Breast epithelium (tissue), 4 donors: ENCODE measurements at regions of chr17 and their contacts with region 1.

Region 1: GRCh38 chr17:79220713-79221291 is 146.2 kb downstream of the ENGASE start:
- DNase-seq: no peak
- H3K4me3 ChIP-seq: no peak overlapping the region
- H3K27ac ChIP-seq: no peak overlapping the region
- H3K4me1 ChIP-seq: no peaks in the 10 kb centered on the region
- H3K27me3 ChIP-seq: peaks cover 0 to 100% of the 10 kb centered on the region in 2 donors
- CTCF ChIP-seq: no peak
- POLR2A ChIP-seq: no peak

Region 2: GRCh38 chr17:79262624-79263023 is 41.8 kb after region 1 on chr17:
- intact Hi-C with region 1: no loop called
- DNase-seq: no peak
- H3K4me3 ChIP-seq: no peak overlapping the region
- H3K27ac ChIP-seq: no peak overlapping the region
- H3K4me1 ChIP-seq: no peaks in the 10 kb centered on the region
- H3K27me3 ChIP-seq: peaks cover 0 to 89% of the 10 kb centered on the region in 2 donors
- CTCF ChIP-seq: no peak
- POLR2A ChIP-seq: no peak

Region 3: GRCh38 chr17:79515646-79516571 is 295.1 kb after region 1 on chr17:
- intact Hi-C with region 1: no loop called
- DNase-seq: no peak
- H3K4me3 ChIP-seq: no peak overlapping the region
- H3K27ac ChIP-seq: no peak overlapping the region
- H3K4me1 ChIP-seq: no peaks in the 10 kb centered on the region
- H3K27me3 ChIP-seq: peaks cover 0 to 55% of the 10 kb centered on the region in 2 donors
- CTCF ChIP-seq: no peak
- POLR2A ChIP-seq: no peak

Region 4: GRCh38 chr17:79888811-79889634 is 668.2 kb after region 1 on chr17:
- intact Hi-C with region 1: loop called (anchors 10 kb)
- DNase-seq: peak in 1 of 2 donors; percentile 31
- H3K4me3 ChIP-seq: no peak overlapping the region
- H3K27ac ChIP-seq: no peak overlapping the region
- H3K4me1 ChIP-seq: peaks cover 0 to 7% of the 10 kb centered on the region in 2 donors
- H3K27me3 ChIP-seq: peaks cover 0 to 29% of the 10 kb centered on the region in 2 donors
- CTCF ChIP-seq: no peak
- POLR2A ChIP-seq: no peak